Dorsolateral prefrontal cortex (tissue), 120 donors: ENCODE measurements at regions of chr1 and their contacts with region 1.

Region 1: DNA sequence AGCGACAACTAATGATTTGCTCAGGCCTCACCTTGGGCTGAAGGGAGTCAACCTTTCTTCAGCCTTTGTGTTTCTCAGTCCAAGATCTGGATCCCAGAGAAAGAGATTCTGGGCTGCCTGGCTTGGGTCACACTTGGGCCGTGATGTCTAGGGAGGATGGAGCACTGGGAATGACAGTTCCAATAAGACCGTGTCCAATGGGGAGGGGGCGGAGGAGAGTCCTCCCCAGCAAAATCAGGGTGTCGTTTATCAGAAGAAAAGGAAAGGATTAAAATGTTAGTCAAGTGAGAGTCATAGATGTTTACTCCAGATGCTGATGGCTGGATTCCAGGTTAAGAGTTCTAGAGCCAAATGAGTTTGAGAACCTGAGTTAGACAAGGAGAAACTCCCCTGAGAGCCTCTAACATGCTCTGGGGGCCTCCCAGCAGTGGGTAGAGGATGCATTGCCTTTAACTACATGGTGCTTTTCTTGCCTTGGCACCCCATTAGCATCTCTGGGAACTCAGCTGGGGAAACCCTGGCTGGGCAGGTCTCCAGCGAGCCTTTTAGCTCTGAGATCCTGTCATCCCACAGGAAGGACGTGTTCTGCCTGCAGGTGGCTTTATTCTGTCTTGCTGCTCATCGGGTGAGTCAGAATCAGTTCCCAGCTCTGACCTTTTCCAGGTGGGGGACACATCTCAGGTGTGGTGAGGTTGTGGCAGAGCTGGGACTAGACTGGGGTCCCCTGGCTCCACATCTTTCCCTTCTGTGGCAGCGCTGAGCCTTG is 22.2 kb downstream of the NIPAL3 start:
- DNase-seq: peak in 1 of 10 donors; percentile 46
- H3K4me3 ChIP-seq: peak overlapping the region in 10 of 59 donors; percentile 4 to 36 (median 12)
- H3K27ac ChIP-seq: peak overlapping the region in 58 of 59 donors; percentile 31 to 96 (median 82)
- H3K27me3 ChIP-seq: no peaks in the 10 kb centered on the region
- CTCF ChIP-seq: no peak

Region 2: DNA sequence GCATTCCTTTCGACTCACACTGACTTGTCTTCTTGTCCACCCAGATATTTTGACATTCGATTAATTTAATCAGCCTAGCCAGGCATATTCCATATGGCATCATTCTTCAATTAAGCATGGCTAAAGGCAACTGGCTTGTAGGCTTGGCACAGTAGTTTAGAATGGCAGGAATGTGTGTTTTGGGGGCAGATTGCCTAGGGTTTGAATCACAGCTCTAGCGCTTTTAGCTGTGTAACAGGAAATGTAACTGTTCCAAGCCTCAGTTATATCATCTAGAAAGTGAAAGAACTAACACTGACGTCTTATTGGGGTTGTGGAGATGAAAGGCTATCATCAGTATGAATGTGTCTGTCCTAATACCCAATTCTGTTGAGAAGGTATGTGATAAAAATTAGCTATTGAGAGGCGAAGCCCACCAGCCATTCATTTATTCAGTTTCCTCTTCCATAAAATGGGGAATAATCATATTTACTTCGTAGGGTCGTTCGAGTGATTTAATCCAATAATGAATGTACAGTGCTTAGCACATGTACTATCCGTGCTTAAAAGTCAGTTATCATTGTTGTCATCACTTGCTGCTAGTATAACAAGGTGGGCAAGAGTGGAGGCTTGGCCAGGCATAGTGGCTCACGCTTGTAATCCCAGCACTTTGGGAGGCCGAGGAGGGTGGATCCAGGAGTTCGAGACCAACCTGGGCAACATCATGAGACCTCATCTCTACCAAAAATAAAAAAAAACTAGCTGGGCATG is 160.2 kb before region 1 on chr1:
- intact Hi-C with region 1: no loop called
- DNase-seq: no peak
- H3K4me3 ChIP-seq: no peak overlapping the region
- H3K27ac ChIP-seq: no peak overlapping the region
- H3K27me3 ChIP-seq: peaks cover 0 to 19% (median 0%) of the 10 kb centered on the region in 45 donors
- CTCF ChIP-seq: no peak

Region 3: GRCh38 chr1:24415334-24415909 is 22.4 kb before region 1 on chr1 and contains the start of gene NIPAL3:
- intact Hi-C with region 1: loop called in 1 of 2 experiments (anchors 2 kb)
- DNase-seq: peak; percentile 91 to 98 (median 97)
- H3K4me3 ChIP-seq: peak within 1 kb of the TSS; percentile 57 to 98 (median 78)
- H3K27ac ChIP-seq: peak within 1 kb of the TSS in 58 of 59 donors; percentile 36 to 90 (median 78)
- H3K27me3 ChIP-seq: no peaks in the 10 kb centered on the region
- CTCF ChIP-seq: peak; percentile 49 to 85 (median 69)
- total RNA-seq, gene NIPAL3: 61.8 to 202 (median 104) TPM